GM12878 (cell line): ENCODE measurements at regions of chr20 and their contacts with region 1.

Region 1: GRCh38 chr20:45293041-45294002 is 13.3 kb upstream of the RBPJL start:
- DNase-seq: no peak
- ATAC-seq: peak; percentile 93
- H3K4me3 ChIP-seq: peak overlapping the region; percentile 30; the same call in 1 of the 2 replicates
- H3K27ac ChIP-seq: no peak overlapping the region
- H3K4me1 ChIP-seq: no peaks in the 10 kb centered on the region
- H3K27me3 ChIP-seq: peaks cover 6 to 7% of the 10 kb centered on the region in 2 experiments; a peak in 3 of 4 replicates
- CTCF ChIP-seq: peak; percentile 83 to 96 (median 89)
- EP300 ChIP-seq: no peak
- POLR2A ChIP-seq: no peak
- RAD21 ChIP-seq: peak; percentile 25; the same call in 1 of the 2 replicates

Region 2: DNA sequence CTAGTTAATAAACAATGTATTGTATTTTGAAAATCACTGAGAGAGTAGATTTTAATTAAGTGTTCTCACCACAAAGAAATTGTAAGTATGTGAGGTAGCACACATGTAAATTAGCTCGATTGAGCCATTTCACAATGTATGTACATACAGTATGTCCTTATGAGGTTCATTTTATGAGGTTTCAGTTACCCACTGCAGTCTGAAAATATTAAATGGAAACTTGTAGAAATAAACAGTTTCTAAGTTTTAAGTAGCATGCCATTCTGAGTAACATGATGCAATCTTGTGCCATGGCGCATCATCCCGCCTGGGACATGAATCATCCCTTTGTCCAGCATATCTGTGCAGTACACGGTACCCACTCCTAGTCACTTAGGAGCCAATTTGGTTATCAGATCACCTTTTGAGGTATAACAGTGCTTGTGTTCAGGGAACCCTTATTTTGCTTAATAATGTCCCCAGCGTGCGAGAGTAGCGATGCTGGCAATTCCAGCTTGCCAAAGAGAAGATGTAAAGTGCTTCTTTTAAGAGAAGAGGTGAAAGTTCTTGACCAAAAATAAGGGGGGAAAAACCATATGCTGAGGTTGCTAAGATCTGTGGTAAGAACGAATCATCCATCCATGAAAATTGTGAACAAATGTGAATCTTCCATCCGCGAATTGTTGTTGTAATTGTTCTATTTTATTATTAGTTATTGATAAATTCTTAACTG is 257.1 kb before region 1 on chr20:
- CTCF ChIA-PET with region 1: interaction called, 4 read pairs
- POLR2A ChIA-PET with region 1: no interaction called
- RAD21 ChIA-PET with region 1: no interaction called
- SMC1A ChIA-PET with region 1: no interaction called
- in situ Hi-C with region 1: no loop called
- intact Hi-C with region 1: loop called (anchors 5 kb)
- DNase-seq: no peak
- ATAC-seq: no peak
- H3K4me3 ChIP-seq: no peak overlapping the region
- H3K27ac ChIP-seq: no peak overlapping the region
- H3K4me1 ChIP-seq: peaks cover 9% of the 10 kb centered on the region
- H3K27me3 ChIP-seq: no peaks in the 10 kb centered on the region
- CTCF ChIP-seq: no peak
- EP300 ChIP-seq: no peak
- POLR2A ChIP-seq: no peak
- RAD21 ChIP-seq: no peak

Region 3: DNA sequence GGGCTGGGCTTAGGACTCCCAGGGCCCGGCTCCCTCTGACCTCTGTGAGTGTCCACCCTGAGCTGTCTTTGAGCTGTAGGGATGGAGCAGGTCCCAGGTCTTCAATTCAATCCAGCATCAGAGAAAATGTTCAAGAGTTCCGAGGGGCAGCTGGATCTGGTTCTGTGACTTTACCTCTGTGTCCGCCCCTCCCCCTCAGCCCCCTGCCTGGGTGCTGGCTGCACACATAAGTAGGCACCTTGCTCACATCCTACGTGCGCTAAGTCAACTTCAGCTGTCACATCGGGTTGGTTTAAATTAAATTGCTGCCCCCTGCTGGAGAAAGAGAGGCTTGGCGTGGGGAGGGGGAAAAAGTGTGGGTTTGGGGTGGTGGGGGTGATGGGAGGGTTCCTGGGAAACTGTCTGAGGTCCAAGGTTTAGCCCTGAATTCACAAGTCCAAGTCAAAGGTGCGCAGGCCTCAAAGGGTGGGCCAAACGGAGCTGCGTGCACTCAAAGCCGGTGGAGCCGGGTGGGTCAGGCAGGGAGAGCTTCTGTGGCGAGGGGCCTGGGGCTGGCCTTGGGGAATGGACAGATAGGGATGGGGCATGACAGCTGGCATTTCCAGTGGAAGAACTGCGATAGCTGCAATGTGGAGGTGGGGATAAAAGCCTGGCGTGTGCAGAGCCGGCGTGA is 181.4 kb before region 1 on chr20:
- CTCF ChIA-PET with region 1: interaction called, 42 read pairs
- POLR2A ChIA-PET with region 1: no interaction called
- RAD21 ChIA-PET with region 1: interaction called, 3 read pairs
- SMC1A ChIA-PET with region 1: no interaction called
- in situ Hi-C with region 1: no loop called
- intact Hi-C with region 1: no loop called
- DNase-seq: no peak
- ATAC-seq: peak; percentile 38; the same call in 2 of the 3 replicates
- H3K4me3 ChIP-seq: no peak overlapping the region
- H3K27ac ChIP-seq: no peak overlapping the region
- H3K4me1 ChIP-seq: no peaks in the 10 kb centered on the region
- H3K27me3 ChIP-seq: no peaks in the 10 kb centered on the region; a peak in 1 of 4 replicates
- CTCF ChIP-seq: peak; percentile 29 to 39 (median 36); a peak in 5 of 6 replicates
- EP300 ChIP-seq: no peak
- POLR2A ChIP-seq: no peak
- RAD21 ChIP-seq: peak; percentile 27

Region 4: GRCh38 chr20:45138561-45139300 is 154.6 kb before region 1 on chr20:
- CTCF ChIA-PET with region 1: interaction called, 34 read pairs
- POLR2A ChIA-PET with region 1: no interaction called
- RAD21 ChIA-PET with region 1: interaction called, 3 read pairs
- SMC1A ChIA-PET with region 1: interaction called, 13 read pairs
- in situ Hi-C with region 1: no loop called
- intact Hi-C with region 1: loop called (anchors 5 kb)
- DNase-seq: no peak
- ATAC-seq: peak; percentile 80
- H3K4me3 ChIP-seq: no peak overlapping the region
- H3K27ac ChIP-seq: no peak overlapping the region
- H3K4me1 ChIP-seq: no peaks in the 10 kb centered on the region
- H3K27me3 ChIP-seq: peaks cover 1 to 5% of the 10 kb centered on the region in 2 experiments; a peak in 3 of 4 replicates
- CTCF ChIP-seq: peak; percentile 58 to 81 (median 80)
- EP300 ChIP-seq: no peak
- POLR2A ChIP-seq: no peak
- RAD21 ChIP-seq: peak; percentile 50

Region 5: GRCh38 chr20:45311589-45312211 is 18.4 kb after region 1 on chr20:
- CTCF ChIA-PET with region 1: interaction called, 12 read pairs
- POLR2A ChIA-PET with region 1: interaction called, 4 read pairs
- RAD21 ChIA-PET with region 1: no interaction called
- SMC1A ChIA-PET with region 1: no interaction called
- in situ Hi-C with region 1: no loop called
- intact Hi-C with region 1: no loop called
- DNase-seq: no peak
- ATAC-seq: peak; percentile 93
- H3K4me3 ChIP-seq: no peak overlapping the region
- H3K27ac ChIP-seq: no peak overlapping the region
- H3K4me1 ChIP-seq: no peaks in the 10 kb centered on the region
- H3K27me3 ChIP-seq: peaks cover 6 to 8% of the 10 kb centered on the region in 2 experiments; a peak in 3 of 4 replicates
- CTCF ChIP-seq: peak; percentile 78 to 85 (median 84)
- EP300 ChIP-seq: no peak
- POLR2A ChIP-seq: no peak
- RAD21 ChIP-seq: peak; percentile 44